PC-9 (cell line): ENCODE measurements at regions of chr19 and their contacts with region 1.

Region 1: DNA sequence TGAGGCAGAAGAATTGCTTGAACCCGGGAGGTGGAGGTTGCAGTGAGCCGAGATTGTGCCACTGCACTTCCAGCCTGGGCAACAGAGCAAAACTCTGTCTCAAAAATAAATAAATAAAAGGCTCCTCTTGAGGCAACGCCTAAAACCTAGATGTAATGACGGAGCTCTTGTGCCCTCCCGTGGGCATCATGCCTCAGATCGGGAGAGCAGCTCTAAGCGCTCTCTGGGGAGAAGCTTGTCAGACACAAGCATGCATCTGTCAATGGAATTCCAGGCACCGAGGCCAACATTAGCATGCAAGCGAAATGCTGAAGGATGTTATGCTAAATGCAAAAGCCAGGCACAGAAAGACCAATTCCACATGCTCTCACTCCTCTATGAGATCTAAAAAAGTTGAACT is 45.6 kb upstream of the MRI1 start:
- DNase-seq: peak; percentile 18 to 57
- H3K4me3 ChIP-seq: no peak overlapping the region
- H3K27ac ChIP-seq: no peak overlapping the region
- H3K4me1 ChIP-seq: no peaks in the 10 kb centered on the region
- H3K27me3 ChIP-seq: peaks cover 56% of the 10 kb centered on the region
- CTCF ChIP-seq: peak; percentile 56

Region 2: DNA sequence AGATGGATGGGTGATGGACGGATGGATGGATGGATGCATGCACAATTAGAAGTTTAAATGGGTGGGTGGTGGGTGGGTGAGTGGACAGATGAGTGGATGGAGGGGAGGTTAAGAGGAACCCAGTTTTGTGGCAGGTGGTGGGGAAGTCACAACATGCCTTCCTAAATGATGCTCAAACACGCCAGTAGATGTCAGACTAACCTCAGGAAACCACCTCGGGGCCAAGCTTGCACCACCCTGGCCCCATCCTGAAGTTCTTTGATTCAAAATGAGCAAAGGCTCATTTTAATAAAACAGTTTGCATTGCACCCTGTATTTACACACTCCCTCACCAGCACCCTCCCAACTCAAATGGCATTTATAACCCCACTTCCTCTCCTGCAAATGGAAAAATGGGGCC is 121.1 kb before region 1 on chr19:
- CTCF ChIA-PET with region 1: no interaction called
- POLR2A ChIA-PET with region 1: no interaction called
- intact Hi-C with region 1: loop called (anchors 1 kb)
- DNase-seq: peak; percentile 40 to 43
- H3K4me3 ChIP-seq: no peak overlapping the region
- H3K27ac ChIP-seq: no peak overlapping the region
- H3K4me1 ChIP-seq: no peaks in the 10 kb centered on the region
- H3K27me3 ChIP-seq: peaks cover 31% of the 10 kb centered on the region
- CTCF ChIP-seq: peak; percentile 78